ENCODE measurements at regions of chr1 and their contacts with region 1.

Region 1: DNA sequence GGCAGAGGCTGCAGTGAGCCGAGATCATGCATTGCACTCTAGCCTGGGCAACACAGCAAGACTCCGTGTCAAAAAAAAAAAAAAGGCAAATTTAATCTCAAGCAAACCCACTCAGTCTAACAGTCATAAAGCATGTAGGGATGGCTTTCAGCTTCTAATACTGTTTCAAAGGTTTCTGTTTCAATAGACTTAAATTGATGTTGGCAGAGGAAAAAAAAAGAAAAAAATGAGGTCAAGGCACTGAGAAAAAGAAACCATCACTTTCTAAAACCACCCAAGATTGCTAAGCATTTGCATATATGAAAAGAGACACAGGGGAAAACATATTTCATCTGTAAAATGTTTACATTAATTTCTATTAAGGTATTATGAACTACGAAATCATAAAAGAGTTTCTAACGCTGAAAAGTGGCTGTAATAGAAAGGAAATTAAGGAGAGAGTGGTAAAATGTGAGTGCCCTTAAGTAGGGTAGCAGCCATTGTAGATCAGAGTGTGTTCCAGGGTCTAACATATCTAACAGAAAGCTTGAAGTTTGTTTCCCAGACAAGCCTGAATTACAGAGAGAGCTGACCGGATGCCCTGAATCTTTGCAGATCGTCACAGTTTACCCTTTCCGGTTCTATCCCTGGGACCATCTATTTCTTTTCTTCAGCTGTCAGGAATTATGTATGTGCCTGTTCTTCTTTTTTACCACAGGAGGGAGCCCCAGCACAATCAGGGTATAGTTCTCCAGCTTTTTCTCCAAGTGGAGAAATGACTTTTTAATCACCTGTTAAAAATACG is 70.0 kb downstream of the PLD5 start:
- DNase-seq: peak; percentile 77
- H3K4me3 Mint-ChIP-seq: no peak overlapping the region
- H3K27ac Mint-ChIP-seq: no peak overlapping the region
- H3K4me1 Mint-ChIP-seq: peaks cover 7% of the 10 kb centered on the region
- H3K27me3 Mint-ChIP-seq: no peaks in the 10 kb centered on the region
- CTCF ChIP-seq: peak; percentile 93

Region 2: GRCh38 chr1:241902391-241903065 is 551.9 kb before region 1 on chr1:
- CTCF ChIA-PET with region 1: interaction called, 34 read pairs
- POLR2A ChIA-PET with region 1: no interaction called
- intact Hi-C with region 1: loop called (anchors 5 kb)
- DNase-seq: no peak
- H3K4me3 Mint-ChIP-seq: no peak overlapping the region
- H3K27ac Mint-ChIP-seq: no peak overlapping the region
- H3K4me1 Mint-ChIP-seq: no peaks in the 10 kb centered on the region
- H3K27me3 Mint-ChIP-seq: no peaks in the 10 kb centered on the region
- CTCF ChIP-seq: no peak

Region 3: GRCh38 chr1:242425232-242425631 is 29.2 kb before region 1 on chr1:
- CTCF ChIA-PET with region 1: interaction called, 28 read pairs
- POLR2A ChIA-PET with region 1: interaction called, 4 read pairs
- intact Hi-C with region 1: no loop called
- DNase-seq: peak; percentile 80
- H3K4me3 Mint-ChIP-seq: no peak overlapping the region
- H3K27ac Mint-ChIP-seq: no peak overlapping the region
- H3K4me1 Mint-ChIP-seq: peaks cover 17% of the 10 kb centered on the region
- H3K27me3 Mint-ChIP-seq: no peaks in the 10 kb centered on the region
- CTCF ChIP-seq: peak; percentile 40

Region 4: GRCh38 chr1:242467556-242468145 is 13.2 kb after region 1 on chr1:
- CTCF ChIA-PET with region 1: interaction called, 117 read pairs
- POLR2A ChIA-PET with region 1: no interaction called
- intact Hi-C with region 1: no loop called
- DNase-seq: peak; percentile 88
- H3K4me3 Mint-ChIP-seq: no peak overlapping the region
- H3K27ac Mint-ChIP-seq: no peak overlapping the region
- H3K4me1 Mint-ChIP-seq: peaks cover 6% of the 10 kb centered on the region
- H3K27me3 Mint-ChIP-seq: no peaks in the 10 kb centered on the region
- CTCF ChIP-seq: peak; percentile 97

Region 5: DNA sequence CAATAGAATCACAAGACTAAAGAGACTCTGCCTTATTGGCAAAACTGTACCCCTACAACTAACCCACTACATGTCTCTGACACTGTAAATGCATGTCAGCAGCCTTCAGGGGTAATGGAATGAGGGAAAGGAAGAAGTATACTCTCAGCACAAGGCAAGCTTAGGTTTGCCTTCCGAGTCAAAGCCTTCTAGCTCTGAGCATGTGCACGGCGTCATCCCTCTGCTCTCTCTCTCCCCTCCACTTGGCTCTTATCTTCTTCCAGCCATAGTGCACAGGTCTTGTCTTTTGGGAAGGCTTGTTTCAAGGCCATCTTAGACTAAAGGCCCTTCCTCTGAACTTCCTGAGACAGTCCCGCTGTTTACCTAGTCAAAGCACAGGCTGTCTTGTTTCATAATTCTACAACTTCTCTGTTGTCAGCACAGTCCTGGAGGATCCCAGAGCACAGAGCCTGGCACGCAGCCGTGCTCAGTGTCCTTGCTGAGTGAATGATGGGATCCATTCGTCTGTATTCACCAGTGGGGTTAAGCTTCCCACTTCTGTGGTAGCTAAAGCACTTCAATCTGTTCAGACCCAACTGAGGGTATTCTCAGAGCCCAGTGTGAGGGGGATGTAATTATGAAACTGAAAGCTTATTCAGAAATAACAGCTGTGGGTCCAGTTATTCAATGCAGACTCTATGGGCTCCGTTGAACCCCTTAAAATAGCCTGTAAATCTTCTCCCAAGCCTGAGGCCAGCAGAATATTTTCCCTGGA is 236.6 kb after region 1 on chr1:
- CTCF ChIA-PET with region 1: no interaction called
- POLR2A ChIA-PET with region 1: no interaction called
- intact Hi-C with region 1: no loop called
- DNase-seq: no peak
- H3K4me3 Mint-ChIP-seq: no peak overlapping the region
- H3K27ac Mint-ChIP-seq: no peak overlapping the region
- H3K4me1 Mint-ChIP-seq: peaks cover 4% of the 10 kb centered on the region
- H3K27me3 Mint-ChIP-seq: no peaks in the 10 kb centered on the region
- CTCF ChIP-seq: no peak

Region 6: GRCh38 chr1:242800521-242800920 is 346.1 kb after region 1 on chr1:
- CTCF ChIA-PET with region 1: interaction called, 11 read pairs
- POLR2A ChIA-PET with region 1: no interaction called
- intact Hi-C with region 1: no loop called
- DNase-seq: no peak
- H3K4me3 Mint-ChIP-seq: no peak overlapping the region
- H3K27ac Mint-ChIP-seq: no peak overlapping the region
- H3K4me1 Mint-ChIP-seq: no peaks in the 10 kb centered on the region
- H3K27me3 Mint-ChIP-seq: no peaks in the 10 kb centered on the region
- CTCF ChIP-seq: no peak

Measured in MCF 10A (cell line).